ENCODE measurements at regions of chr10 and their contacts with region 1.

Region 1: GRCh38 chr10:128011175-128011979 is 104.5 kb downstream of the PTPRE start:
- DNase-seq: peak; percentile 88
- ATAC-seq: peak; percentile 93
- H3K4me3 Mint-ChIP-seq: peak overlapping the region; percentile 28; the same call in 1 of the 2 replicates
- H3K27ac Mint-ChIP-seq: no peak overlapping the region
- H3K4me1 Mint-ChIP-seq: peaks cover 2% of the 10 kb centered on the region; the same call in 1 of the 2 replicates
- H3K27me3 Mint-ChIP-seq: peaks cover 6% of the 10 kb centered on the region
- CTCF ChIP-seq: peak; percentile 97

Region 2: DNA sequence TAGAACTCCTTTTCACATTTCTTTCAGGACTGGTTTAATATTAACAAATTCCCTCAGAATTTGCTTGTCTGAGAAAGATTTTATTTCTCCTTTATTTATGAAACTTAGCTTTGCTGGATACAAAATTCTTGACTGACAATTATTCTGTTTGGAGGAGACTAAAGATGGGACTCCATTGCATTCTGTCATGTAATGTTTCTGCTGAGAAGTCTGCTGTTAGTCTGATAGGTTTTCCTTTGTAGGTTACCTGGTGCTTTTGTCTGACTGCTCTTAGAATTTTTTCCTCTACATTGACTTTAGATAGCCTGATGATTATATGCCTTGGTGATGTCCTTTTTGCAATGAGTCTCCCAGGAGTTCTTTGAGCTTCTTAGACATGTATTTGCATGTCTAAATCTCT is 142.0 kb before region 1 on chr10:
- CTCF ChIA-PET with region 1: interaction called, 16 read pairs
- POLR2A ChIA-PET with region 1: interaction called, 4 read pairs
- DNase-seq: no peak
- ATAC-seq: no peak
- H3K4me3 Mint-ChIP-seq: no peak overlapping the region
- H3K27ac Mint-ChIP-seq: no peak overlapping the region
- H3K4me1 Mint-ChIP-seq: no peaks in the 10 kb centered on the region
- H3K27me3 Mint-ChIP-seq: no peaks in the 10 kb centered on the region; the same call in 1 of the 2 replicates
- CTCF ChIP-seq: no peak

Region 3: DNA sequence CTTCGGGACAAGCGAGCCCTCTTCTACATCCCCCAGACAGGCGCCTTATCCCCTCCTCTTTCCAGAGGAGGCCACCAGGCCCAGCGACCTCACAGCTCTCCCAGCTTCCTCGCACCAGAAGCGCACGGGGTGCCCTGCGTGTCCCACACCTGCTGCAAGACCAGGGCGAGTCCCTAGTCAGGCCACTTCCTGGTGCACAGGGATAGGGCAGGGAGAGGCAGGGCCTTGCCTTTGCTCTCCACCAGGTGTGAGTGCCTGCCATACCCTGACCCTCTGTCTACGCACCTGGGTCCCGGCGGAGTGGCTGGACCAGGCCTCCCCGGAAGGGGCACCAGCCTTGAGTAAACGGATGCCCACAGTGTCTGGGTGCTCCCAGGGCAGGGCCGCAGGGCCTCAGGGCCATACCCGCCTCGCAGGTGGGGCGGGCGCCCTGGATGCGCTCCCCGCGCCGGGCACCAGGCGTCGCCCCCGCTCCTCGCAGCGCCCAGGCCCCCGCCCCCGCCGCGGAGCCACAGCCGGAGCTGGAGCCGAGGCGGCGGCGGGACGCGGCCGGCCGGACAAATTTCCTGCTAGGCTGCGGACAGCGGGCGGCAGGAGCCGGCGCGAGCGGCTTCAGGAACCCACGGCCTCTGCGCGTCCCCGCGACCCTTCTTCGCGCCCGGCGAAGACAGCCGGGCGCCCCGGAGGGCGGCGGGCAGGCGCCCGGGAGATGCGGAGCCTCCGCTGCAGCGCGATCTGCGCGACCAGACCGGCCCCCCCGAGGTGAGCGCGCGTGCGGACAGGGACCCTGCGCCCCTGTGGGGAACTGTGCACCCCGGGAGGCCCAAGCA is 104.6 kb before region 1 on chr10 and contains the start of gene PTPRE:
- CTCF ChIA-PET with region 1: interaction called, 93 read pairs
- POLR2A ChIA-PET with region 1: no interaction called
- DNase-seq: peak; percentile 76
- ATAC-seq: peak; percentile 94
- H3K4me3 Mint-ChIP-seq: peak within 1 kb of the TSS; percentile 52
- H3K27ac Mint-ChIP-seq: no peak within 1 kb of the TSS
- H3K4me1 Mint-ChIP-seq: peaks cover 3% of the 10 kb centered on the region
- H3K27me3 Mint-ChIP-seq: peaks cover 23% of the 10 kb centered on the region
- CTCF ChIP-seq: peak; percentile 65; the same call in 1 of the 2 replicates
- total RNA-seq, gene PTPRE: 1.7 to 3.1 TPM (median 2.0 TPM) in 3 replicates

Region 4: GRCh38 chr10:128047351-128047750 is 36.0 kb after region 1 on chr10:
- CTCF ChIA-PET with region 1: interaction called, 13 read pairs
- POLR2A ChIA-PET with region 1: no interaction called
- DNase-seq: peak; percentile 65
- ATAC-seq: peak; percentile 99
- H3K4me3 Mint-ChIP-seq: no peak overlapping the region
- H3K27ac Mint-ChIP-seq: peak overlapping the region; percentile 45
- H3K4me1 Mint-ChIP-seq: peaks cover 9% of the 10 kb centered on the region
- H3K27me3 Mint-ChIP-seq: peaks cover 6% of the 10 kb centered on the region; the same call in 1 of the 2 replicates
- CTCF ChIP-seq: no peak

Region 5: GRCh38 chr10:128064108-128064969 is 53.0 kb after region 1 on chr10:
- CTCF ChIA-PET with region 1: interaction called, 38 read pairs
- POLR2A ChIA-PET with region 1: no interaction called
- DNase-seq: no peak
- ATAC-seq: no peak
- H3K4me3 Mint-ChIP-seq: no peak overlapping the region
- H3K27ac Mint-ChIP-seq: no peak overlapping the region
- H3K4me1 Mint-ChIP-seq: peaks cover 29% of the 10 kb centered on the region
- H3K27me3 Mint-ChIP-seq: no peaks in the 10 kb centered on the region
- CTCF ChIP-seq: no peak

Region 6: GRCh38 chr10:128111696-128112095 is 100.3 kb after region 1 on chr10:
- CTCF ChIA-PET with region 1: no interaction called
- POLR2A ChIA-PET with region 1: no interaction called
- DNase-seq: no peak
- ATAC-seq: no peak
- H3K4me3 Mint-ChIP-seq: no peak overlapping the region
- H3K27ac Mint-ChIP-seq: no peak overlapping the region
- H3K4me1 Mint-ChIP-seq: no peaks in the 10 kb centered on the region
- H3K27me3 Mint-ChIP-seq: no peaks in the 10 kb centered on the region
- CTCF ChIP-seq: no peak